ENCODE measurements at regions of chr14 and their contacts with region 1.

Region 1: DNA sequence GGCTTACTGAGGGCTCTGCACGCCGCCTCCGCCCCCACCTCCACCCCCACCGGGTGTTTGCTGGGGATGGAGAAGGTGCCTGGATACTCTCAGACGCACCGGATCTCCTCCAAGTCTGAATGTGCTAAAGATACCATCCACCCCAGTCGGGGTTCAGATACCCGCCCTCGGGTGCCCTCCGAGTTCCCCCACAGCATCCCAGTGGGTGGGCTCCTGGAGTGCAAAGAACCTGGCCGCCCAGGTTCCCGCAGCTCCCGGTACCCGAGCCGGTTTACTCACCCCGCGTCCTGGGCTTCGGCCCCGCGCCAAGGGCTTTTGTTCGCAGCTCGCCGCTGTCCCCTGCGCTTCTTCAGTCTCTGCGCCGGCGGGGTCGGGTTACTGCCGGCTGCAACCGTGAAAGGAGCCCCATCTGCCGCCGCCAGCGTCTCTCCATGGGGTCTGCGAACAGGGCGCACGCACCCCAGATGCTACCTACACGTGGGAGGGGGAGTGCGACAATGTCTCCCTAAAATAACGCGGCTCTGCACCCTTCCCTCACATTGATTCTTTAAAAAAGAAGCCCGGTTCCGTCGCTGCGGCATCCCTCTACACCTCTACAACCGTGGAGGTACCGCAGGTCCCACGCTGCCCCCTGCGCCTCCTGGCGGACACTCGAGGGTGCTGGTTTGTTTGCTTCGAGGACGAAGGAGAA is at the start of gene CCDC177:
- DNase-seq: peak; percentile 81
- ATAC-seq: peak; percentile 82
- H3K4me3 Mint-ChIP-seq: peak within 1 kb of the TSS; percentile 68
- H3K27ac Mint-ChIP-seq: no peak within 1 kb of the TSS
- H3K4me1 Mint-ChIP-seq: peaks cover 5% of the 10 kb centered on the region
- H3K27me3 Mint-ChIP-seq: peaks cover 49% of the 10 kb centered on the region
- CTCF ChIP-seq: peak; percentile 97
- total RNA-seq, gene CCDC177: not detected

Region 2: GRCh38 chr14:69553221-69553620 is 21.2 kb before region 1 on chr14:
- CTCF ChIA-PET with region 1: interaction called, 52 read pairs
- POLR2A ChIA-PET with region 1: interaction called, 3 read pairs
- intact Hi-C with region 1: loop called (anchors 2 kb)
- DNase-seq: no peak
- ATAC-seq: no peak
- H3K4me3 Mint-ChIP-seq: no peak overlapping the region
- H3K27ac Mint-ChIP-seq: no peak overlapping the region
- H3K4me1 Mint-ChIP-seq: no peaks in the 10 kb centered on the region
- H3K27me3 Mint-ChIP-seq: peaks cover 28% of the 10 kb centered on the region
- CTCF ChIP-seq: no peak